ENCODE measurements at regions of chr22 and their contacts with region 1.

Region 1: DNA sequence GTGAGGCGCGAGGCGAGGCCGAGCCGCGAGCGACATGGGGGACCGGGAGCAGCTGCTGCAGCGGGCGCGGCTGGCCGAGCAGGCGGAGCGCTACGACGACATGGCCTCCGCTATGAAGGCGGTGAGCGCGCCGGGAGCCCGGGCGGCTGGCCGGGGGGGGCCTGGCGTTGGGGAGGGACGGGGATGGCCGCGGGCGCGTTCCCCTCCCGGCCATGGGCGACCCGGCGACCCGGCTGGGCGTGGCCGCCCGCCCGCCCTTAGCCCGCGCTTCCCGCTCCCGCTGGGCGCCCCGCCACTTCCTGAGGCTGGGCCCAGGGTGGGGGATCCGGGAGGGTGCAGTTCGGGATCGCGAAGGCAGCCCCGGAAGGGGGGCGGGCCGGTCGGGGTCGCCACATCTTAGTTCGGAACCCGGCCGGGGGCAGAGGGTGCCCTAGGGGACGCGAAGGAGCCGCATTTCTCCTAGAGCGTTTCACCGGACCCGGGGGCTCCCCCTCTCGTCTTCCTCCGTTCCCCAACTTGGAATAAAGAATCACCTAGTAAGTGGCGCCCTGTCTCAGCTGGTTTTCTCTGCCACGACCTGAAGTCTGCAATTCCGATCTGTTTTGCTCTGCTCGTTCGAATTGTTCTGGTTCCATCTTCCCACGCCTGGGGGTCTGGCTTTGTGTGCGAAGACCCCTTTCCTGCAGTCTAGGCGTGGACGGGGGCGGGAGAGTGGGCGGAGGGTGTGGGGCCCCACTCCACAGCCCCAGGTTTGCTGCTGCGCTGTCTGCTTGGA is 552 bp downstream of the YWHAH start:
- DNase-seq: peak in 1 of 2 experiments; percentile 16
- ATAC-seq: peak; percentile 19 to 31; a peak in 5 of 6 replicates
- H3K4me3 ChIP-seq: peak overlapping the region; percentile 96
- H3K27ac ChIP-seq: peak overlapping the region; percentile 100
- H3K4me1 ChIP-seq: peaks cover 26% of the 10 kb centered on the region
- CTCF ChIP-seq: no peak
- EP300 ChIP-seq: no peak
- POLR2A ChIP-seq: no peak
- RAD21 ChIP-seq: no peak

Region 2: DNA sequence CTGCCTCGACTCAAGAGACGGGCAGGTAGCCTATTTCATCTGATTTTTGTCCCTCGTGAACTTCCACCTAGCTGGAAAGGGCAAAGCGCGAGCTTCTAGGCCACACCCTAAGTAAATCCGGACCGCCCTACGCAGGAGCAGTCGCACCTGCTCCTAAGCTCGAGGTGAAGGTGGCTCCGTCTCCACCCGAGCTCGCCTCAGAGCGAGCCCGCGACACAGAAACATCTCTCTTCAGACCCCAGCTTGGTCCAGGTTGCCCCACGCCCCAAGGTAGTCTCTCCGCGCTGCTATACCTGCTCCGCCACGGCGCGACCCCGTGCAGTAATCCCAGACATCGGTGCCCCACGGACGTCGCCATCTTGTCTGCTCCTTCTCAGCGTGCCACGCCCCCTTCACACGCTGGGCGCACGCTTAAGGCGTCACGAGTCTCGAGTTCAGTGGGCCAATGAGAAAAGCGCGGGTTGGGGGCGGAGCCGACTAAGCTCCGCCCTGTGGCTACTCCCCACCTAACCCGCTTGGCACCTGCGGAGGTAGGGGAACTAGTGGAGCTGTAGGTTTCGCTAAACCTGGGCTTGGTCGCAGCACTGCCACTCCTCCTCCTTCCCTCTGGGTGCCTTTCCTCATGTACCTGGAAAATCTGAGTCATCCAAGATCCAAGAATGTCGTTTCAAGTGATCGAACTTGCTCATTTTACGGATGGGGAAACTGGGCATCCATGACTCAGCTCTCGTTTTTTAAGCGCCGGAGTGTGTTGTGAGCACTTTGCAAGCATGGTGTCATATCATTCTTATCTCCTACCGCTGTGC is 282.8 kb before region 1 on chr22 and contains the start of gene PISD:
- CTCF ChIA-PET with region 1: interaction called, 12 read pairs
- POLR2A ChIA-PET with region 1: no interaction called
- DNase-seq: peak; percentile 88 to 94
- ATAC-seq: peak; percentile 92
- H3K4me3 ChIP-seq: peak within 1 kb of the TSS; percentile 72
- H3K27ac ChIP-seq: peak within 1 kb of the TSS; percentile 80 to 90
- H3K4me1 ChIP-seq: 0 out of 3 replicates have a peak, but pooled peaks cover 3% of the 10 kb centered on the region
- CTCF ChIP-seq: no peak
- EP300 ChIP-seq: no peak
- POLR2A ChIP-seq: peak; percentile 78
- RAD21 ChIP-seq: no peak
- polyA plus RNA-seq, gene PISD: 11.0 and 13.1 TPM in 2 replicates

Region 3: GRCh38 chr22:31870890-31871289 is 74.0 kb before region 1 on chr22:
- CTCF ChIA-PET with region 1: interaction called, 36 read pairs
- POLR2A ChIA-PET with region 1: no interaction called
- DNase-seq: peak; percentile 68 to 74
- ATAC-seq: peak; percentile 98 to 99
- H3K4me3 ChIP-seq: no peak overlapping the region
- H3K27ac ChIP-seq: peak overlapping the region in 1 of 2 experiments; percentile 33; a peak in 1 of 6 replicates
- H3K4me1 ChIP-seq: peaks cover 18% of the 10 kb centered on the region
- CTCF ChIP-seq: peak; percentile 37
- EP300 ChIP-seq: no peak
- POLR2A ChIP-seq: no peak
- RAD21 ChIP-seq: peak in 1 of 2 experiments; percentile 42; a peak in 3 of 5 replicates

Region 4: DNA sequence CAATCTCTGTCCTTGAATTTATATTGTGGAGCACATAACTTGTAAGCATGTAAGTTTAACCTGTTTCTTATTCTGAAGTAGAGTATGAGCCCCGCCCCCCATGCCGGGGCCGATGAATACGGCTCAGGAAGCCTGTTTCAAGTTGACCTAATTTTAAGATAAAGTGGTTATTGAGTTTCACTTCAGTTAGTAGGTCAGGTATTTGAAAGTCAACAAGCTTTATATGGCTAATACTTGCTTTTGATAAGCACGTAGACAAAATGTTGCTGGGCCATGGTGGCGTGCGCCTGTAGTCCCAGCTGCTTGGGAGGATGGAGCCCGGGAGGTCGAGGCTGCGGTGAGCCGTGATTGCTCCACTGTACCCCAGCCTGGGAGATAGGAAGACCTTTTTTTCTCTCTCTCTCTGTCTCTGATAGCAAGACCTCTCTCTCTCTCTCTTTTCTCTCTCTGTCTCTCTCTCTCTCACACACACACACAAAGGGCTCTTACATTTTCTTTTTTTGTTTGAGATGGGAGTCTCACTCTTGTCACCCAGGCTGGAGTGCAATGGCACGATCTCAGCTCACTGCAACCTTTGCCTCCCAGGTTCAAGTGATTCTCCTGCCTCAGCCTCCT is 13.8 kb after region 1 on chr22:
- CTCF ChIA-PET with region 1: interaction called, 15 read pairs
- POLR2A ChIA-PET with region 1: no interaction called
- DNase-seq: no peak
- ATAC-seq: no peak
- H3K4me3 ChIP-seq: no peak overlapping the region
- H3K27ac ChIP-seq: no peak overlapping the region
- H3K4me1 ChIP-seq: peaks cover 9% of the 10 kb centered on the region; the same call in 2 of the 3 replicates
- CTCF ChIP-seq: no peak
- EP300 ChIP-seq: no peak
- POLR2A ChIP-seq: no peak
- RAD21 ChIP-seq: no peak